ENCODE measurements at regions of chr10 and their contacts with region 1.

Region 1: GRCh38 chr10:17228091-17228940 is at the start of gene VIM:
- DNase-seq: peak; percentile 94
- H3K4me3 Mint-ChIP-seq: peak within 1 kb of the TSS; percentile 96
- H3K27ac Mint-ChIP-seq: peak within 1 kb of the TSS; percentile 95
- H3K4me1 Mint-ChIP-seq: peaks cover 44% of the 10 kb centered on the region
- H3K27me3 Mint-ChIP-seq: peaks cover 2% of the 10 kb centered on the region
- total RNA-seq, gene VIM: 178 and 182 TPM in 2 replicates

Region 2: GRCh38 chr10:16436758-16437539 is 791.4 kb before region 1 on chr10 and contains the start of gene PTER:
- intact Hi-C with region 1: loop called (anchors 10 kb)
- DNase-seq: peak; percentile 100
- H3K4me3 Mint-ChIP-seq: peak within 1 kb of the TSS; percentile 95
- H3K27ac Mint-ChIP-seq: peak within 1 kb of the TSS; percentile 96
- H3K4me1 Mint-ChIP-seq: peaks cover 37% of the 10 kb centered on the region
- H3K27me3 Mint-ChIP-seq: peaks cover 9% of the 10 kb centered on the region
- total RNA-seq, gene PTER: 16.7 and 17.8 TPM in 2 replicates

Region 3: GRCh38 chr10:16742165-16742960 is 486.0 kb before region 1 on chr10:
- intact Hi-C with region 1: no loop called
- DNase-seq: no peak
- H3K4me3 Mint-ChIP-seq: no peak overlapping the region
- H3K27ac Mint-ChIP-seq: no peak overlapping the region
- H3K4me1 Mint-ChIP-seq: no peaks in the 10 kb centered on the region
- H3K27me3 Mint-ChIP-seq: no peaks in the 10 kb centered on the region

Region 4: DNA sequence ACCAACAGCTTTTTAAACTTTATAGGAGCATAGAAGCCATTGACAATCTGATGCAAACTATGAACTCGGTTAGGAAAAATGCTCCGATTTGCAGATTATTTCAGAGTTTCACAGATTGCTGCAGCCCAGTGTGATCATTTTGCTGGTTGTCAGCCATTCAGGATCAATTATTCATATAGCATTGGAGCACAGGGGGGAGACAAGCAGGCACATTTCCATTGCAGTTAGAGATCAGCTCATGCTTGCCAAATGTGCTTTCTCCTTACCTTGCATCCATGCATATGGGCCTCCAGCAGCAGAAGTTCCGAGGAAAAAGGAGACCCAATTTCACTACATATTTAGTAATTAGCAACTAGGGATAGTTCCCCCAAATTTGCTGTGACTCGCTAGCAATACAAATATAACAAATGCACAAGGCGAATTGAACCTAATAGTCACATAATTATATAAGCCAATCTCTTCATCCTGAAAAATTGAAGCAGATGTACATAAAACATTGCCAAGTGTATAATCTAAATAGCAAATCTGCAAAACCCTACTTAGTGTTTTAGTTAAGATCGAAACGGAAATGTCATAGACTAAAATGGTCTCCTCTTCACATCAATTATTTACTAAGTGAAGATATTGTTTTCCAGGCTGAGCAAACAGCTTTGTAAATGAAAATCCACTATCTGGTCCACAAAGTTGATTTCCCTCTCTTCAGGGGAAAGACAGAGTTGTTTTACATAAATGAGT is 361.6 kb before region 1 on chr10:
- intact Hi-C with region 1: no loop called
- DNase-seq: peak; percentile 42
- H3K4me3 Mint-ChIP-seq: no peak overlapping the region
- H3K27ac Mint-ChIP-seq: no peak overlapping the region
- H3K4me1 Mint-ChIP-seq: no peaks in the 10 kb centered on the region
- H3K27me3 Mint-ChIP-seq: peaks cover 25% of the 10 kb centered on the region

Region 5: DNA sequence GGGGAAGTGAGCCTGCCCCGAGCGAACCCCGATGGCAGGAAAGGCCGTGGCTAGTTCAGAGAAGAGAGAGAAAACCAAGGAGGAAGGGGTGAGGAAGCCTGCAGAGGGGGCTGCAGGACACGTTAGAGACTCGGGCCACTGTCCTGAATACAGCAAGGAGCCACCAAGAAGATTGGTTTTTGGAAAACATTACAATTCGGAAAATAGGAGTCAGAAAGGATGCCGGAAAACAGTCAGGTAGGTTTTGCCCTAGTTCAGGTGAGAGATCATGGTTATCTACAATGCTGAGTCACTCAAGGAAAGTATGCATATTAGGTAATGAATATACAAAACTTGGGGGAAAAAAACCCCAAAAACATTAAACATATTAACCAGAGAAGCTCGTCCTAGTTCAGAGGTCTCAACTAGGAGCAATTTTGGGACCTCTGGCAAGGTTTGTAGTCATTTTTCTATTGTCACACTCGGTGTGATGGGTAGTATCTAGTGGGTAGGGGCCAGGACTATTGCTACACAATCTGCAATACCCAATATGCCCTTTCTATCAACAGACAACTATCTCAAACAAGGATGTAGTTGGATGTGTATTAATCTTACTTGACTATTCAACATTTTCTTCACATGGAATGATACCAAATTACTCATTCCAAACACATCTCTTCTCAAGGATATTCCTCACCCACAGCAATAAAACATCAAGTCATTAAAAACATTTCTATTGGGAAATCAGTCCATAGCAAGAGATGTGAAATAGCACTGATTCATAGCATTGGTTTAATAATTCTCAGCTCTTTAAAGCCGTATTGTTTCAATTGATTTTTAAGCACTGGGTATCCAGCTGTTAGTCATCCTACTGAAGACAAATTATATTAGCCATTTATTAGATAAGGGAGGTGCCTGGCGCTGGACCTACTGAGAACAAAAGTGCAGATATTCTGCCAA is 336.7 kb before region 1 on chr10:
- intact Hi-C with region 1: loop called (anchors 1 kb)
- DNase-seq: peak; percentile 67
- H3K4me3 Mint-ChIP-seq: peak overlapping the region; percentile 30
- H3K27ac Mint-ChIP-seq: peak overlapping the region; percentile 10
- H3K4me1 Mint-ChIP-seq: peaks cover 5% of the 10 kb centered on the region
- H3K27me3 Mint-ChIP-seq: peaks cover 22% of the 10 kb centered on the region

Region 6: GRCh38 chr10:17144757-17145156 is 83.6 kb before region 1 on chr10:
- intact Hi-C with region 1: loop called (anchors 1 kb)
- DNase-seq: peak; percentile 85
- H3K4me3 Mint-ChIP-seq: no peak overlapping the region
- H3K27ac Mint-ChIP-seq: peak overlapping the region; percentile 61
- H3K4me1 Mint-ChIP-seq: peaks cover 23% of the 10 kb centered on the region
- H3K27me3 Mint-ChIP-seq: peaks cover 5% of the 10 kb centered on the region

Region 7: GRCh38 chr10:17206210-17206709 is 22.1 kb before region 1 on chr10:
- intact Hi-C with region 1: loop called (anchors 1 kb)
- DNase-seq: peak; percentile 79
- H3K4me3 Mint-ChIP-seq: peak overlapping the region; percentile 63
- H3K27ac Mint-ChIP-seq: peak overlapping the region; percentile 83
- H3K4me1 Mint-ChIP-seq: peaks cover 31% of the 10 kb centered on the region
- H3K27me3 Mint-ChIP-seq: no peaks in the 10 kb centered on the region

Measured in activated CD4-positive, alpha-beta T cell treated with anti-CD3 and anti-CD28 coated beads, Interleukin-2, amount 10 ng/mL, durations not matched to agents 24 days and 14 days (primary cell).